ENCODE measurements at regions of chr14 and their contacts with region 1.

Region 1: DNA sequence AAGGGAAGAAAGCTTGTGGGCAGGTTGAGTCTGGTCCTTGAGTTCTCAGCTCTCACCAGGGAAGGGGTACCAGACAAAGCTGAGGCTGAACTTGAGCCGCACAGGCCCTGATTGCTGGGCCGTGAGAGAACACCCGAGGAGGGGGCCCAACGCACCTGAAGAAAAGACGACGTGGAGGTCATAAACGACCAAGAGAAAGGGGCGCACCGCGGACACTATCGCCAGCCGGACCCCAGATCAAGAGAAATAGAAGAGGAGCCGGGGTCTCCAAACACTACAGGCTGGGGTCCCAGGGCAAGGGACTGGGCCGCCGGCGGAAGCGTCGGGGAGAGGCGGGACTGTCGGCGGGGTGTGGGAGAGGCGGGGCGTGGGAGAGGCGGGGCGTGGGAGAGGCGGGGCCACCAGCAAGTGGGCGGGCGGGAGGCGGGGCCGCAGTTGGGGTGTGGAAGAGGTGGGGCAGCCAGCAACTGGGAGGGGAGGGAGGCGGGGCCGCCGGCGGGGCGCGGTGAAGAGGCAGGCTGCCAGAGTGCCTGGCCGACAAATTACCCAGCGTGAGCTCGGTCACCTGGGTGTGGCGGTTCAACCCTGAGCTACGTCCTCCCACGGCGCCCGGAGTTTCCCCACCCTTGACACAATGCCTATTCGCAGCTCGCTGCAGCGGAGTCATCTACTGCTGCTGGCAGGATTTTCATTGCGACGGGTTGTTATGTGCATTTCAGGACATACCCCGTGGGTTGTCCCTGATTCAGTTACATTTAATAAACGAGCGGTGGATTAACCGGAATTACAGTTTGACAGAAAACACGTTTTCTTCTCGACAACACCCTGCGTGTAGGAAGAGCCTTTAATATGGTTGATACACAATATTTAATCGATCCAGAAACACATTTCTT is 15.5 kb upstream of the NEMF start:
- DNase-seq: peak; percentile 95
- H3K4me3 Mint-ChIP-seq: peak overlapping the region; percentile 96
- H3K27ac Mint-ChIP-seq: peak overlapping the region; percentile 99
- H3K4me1 Mint-ChIP-seq: peaks cover 11% of the 10 kb centered on the region
- H3K27me3 Mint-ChIP-seq: no peaks in the 10 kb centered on the region
- CTCF ChIP-seq: no peak

Region 2: DNA sequence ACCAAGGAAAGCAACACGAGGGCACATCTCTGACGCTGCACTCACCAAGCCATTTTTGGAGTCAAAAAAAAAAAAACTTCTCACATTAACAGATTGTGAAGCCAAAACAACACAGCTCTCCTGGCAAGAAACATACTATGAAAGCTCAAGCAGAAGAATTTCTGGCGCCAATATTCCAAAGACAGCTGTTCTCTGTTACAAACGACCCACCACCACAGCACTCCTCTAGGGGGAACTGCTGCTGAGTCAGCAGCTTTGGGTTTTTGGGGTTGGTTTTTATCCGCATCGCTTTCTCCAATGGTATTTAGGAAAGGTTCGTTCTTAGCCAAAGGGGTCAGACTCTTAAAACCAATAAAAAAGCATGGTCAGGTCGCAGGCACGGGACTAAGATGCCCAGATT is 661.2 kb before region 1 on chr14:
- CTCF ChIA-PET with region 1: no interaction called
- POLR2A ChIA-PET with region 1: no interaction called
- intact Hi-C with region 1: no loop called
- DNase-seq: no peak
- H3K4me3 Mint-ChIP-seq: no peak overlapping the region
- H3K27ac Mint-ChIP-seq: no peak overlapping the region
- H3K4me1 Mint-ChIP-seq: no peaks in the 10 kb centered on the region
- H3K27me3 Mint-ChIP-seq: no peaks in the 10 kb centered on the region
- CTCF ChIP-seq: no peak

Region 3: DNA sequence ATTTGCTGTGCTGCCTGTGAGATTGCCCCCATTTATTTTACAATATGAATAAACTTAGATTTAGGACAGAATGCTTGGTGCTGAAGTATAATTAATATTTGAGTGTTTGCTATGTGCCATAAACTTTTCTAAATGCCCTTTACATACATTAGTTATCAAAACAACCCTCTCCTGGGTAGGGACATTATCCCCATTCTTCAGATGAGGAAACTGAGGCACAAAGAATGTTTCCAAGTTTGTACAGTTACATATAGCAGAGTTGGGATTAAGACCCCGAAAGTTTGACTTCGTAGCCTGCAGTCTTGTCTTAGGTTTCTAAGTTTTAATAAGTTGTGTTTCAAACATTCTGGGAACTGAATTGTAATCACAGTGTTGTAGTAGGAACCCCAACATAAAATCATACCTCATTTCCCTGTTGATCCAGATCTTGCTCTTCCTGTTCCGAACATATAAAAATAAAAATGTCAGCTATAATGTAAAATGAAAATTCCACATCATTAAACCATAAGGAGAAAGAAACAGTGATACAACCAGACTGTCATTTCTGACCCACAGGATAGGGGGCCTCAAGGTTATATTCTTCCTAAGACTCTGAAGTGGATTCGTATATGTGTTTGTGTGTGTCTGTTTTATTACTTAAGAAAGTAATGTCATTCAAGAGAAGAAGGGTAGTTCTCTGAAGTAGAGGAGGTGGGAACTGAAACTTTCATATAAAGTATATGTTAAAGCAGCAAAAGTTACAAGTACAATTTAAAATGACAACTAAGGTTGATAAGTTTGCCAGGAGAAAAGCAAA is 81.6 kb before region 1 on chr14:
- CTCF ChIA-PET with region 1: no interaction called
- POLR2A ChIA-PET with region 1: no interaction called
- intact Hi-C with region 1: no loop called
- DNase-seq: no peak
- H3K4me3 Mint-ChIP-seq: no peak overlapping the region
- H3K27ac Mint-ChIP-seq: no peak overlapping the region
- H3K4me1 Mint-ChIP-seq: no peaks in the 10 kb centered on the region
- H3K27me3 Mint-ChIP-seq: no peaks in the 10 kb centered on the region
- CTCF ChIP-seq: no peak

Region 4: DNA sequence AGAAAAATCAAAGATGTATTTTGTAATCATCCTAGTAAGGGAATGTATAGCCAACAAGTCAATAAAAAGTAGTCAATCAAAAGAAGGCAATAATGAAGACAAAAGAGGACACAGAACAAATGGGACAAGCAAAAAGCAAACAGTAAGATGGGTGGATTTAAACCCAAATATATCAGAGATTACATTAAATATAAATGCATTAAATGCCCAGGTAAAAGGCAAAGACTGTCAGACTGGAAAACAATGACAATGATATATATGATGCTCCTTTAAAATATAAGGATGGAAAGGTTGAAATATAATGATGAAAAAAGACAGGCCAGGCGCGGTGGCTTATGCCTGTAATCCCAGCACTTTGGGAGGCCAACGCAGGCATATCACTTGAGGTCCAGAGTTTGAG is 51.2 kb before region 1 on chr14:
- CTCF ChIA-PET with region 1: no interaction called
- POLR2A ChIA-PET with region 1: no interaction called
- intact Hi-C with region 1: no loop called
- DNase-seq: no peak
- H3K4me3 Mint-ChIP-seq: no peak overlapping the region
- H3K27ac Mint-ChIP-seq: no peak overlapping the region
- H3K4me1 Mint-ChIP-seq: no peaks in the 10 kb centered on the region
- H3K27me3 Mint-ChIP-seq: no peaks in the 10 kb centered on the region
- CTCF ChIP-seq: no peak

Region 5: DNA sequence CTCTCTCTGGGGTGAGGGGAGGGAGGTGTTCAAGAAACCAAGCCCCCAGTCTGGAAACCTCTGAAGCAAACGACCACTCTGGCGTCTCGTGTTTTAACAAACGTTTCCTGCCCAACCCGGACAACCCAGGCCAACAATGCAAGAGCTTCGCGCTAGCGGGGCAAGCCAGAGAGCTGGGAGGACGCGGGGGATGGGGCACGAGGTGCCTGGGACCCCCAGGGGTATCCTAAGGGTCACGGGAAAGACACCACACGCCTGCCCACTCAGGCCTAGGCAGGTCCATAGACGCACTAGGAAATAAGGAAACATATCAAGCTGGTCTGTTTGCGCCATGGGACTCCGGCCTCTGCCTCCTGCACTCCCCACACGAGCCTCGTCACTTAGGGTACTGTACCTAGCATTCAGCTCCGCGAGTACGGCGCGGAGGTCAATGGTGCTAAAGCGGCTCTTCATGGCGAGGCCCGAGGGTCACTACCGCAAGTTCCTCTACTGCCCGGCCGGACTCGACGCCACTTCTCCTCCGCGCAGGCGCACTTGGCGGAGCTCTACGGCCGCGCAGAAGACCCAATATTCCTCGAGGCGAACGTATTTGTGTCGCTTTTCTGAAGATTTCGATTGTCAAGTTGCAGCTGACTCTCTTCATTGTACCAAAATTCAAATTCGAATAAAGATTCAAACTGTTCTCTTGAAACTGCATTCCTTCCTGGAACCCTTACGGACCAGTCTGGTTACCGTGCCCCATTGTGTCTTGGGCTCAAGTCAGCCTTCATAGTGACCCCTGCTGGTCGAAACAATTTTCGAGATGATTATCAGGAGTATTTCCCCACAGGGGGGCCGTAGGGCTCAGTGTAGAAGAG is 15.5 kb before region 1 on chr14 and contains the start of gene NEMF:
- CTCF ChIA-PET with region 1: interaction called, 101 read pairs
- POLR2A ChIA-PET with region 1: interaction called, 137 read pairs
- intact Hi-C with region 1: no loop called
- DNase-seq: peak; percentile 92
- H3K4me3 Mint-ChIP-seq: peak within 1 kb of the TSS; percentile 99
- H3K27ac Mint-ChIP-seq: peak within 1 kb of the TSS; percentile 99
- H3K4me1 Mint-ChIP-seq: peaks cover 15% of the 10 kb centered on the region
- H3K27me3 Mint-ChIP-seq: no peaks in the 10 kb centered on the region
- CTCF ChIP-seq: peak; percentile 88
- total RNA-seq, gene NEMF: 55.0 and 57.7 TPM in 2 replicates

Region 6: DNA sequence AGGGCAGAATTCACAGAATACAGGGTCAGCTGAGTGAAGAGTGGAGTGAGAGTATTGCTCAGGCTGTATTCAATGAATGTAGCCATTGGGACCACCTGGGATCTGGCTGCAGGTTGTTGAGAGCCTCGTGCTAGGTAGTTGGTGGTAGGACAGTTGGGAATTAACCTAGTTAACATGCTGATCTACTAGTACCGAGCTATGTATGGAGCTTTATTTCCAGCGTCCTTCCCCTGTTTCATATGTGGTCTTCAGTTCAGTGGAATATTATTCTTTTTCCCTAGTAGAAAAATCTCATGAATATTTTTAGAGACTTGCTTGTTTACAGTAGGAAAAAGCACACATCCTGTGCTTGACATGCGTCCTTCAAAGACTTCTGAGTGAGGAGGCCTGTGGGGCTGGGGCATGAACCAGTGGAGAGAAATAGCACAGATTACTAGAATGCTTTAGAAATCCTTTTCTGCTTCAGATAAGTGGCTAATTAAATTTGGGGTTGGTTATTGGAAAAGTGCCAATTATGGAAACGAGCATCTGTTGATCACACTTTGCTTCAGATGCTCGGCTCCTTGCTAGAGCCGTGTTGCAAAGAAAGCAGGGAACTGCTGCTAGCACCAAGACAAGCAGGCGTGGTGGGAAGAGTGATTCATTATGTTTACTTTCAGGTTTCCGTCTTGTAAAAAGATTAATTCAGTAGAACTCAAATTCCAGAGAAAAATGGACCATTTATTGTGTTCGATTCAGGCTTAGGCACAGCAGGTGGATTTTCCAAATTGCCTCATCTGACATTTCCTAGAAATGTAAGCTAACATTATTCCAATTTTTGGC is 78.5 kb after region 1 on chr14:
- CTCF ChIA-PET with region 1: interaction called, 42 read pairs
- POLR2A ChIA-PET with region 1: interaction called, 33 read pairs
- intact Hi-C with region 1: no loop called
- DNase-seq: peak; percentile 72
- H3K4me3 Mint-ChIP-seq: peak overlapping the region; percentile 42
- H3K27ac Mint-ChIP-seq: peak overlapping the region; percentile 81
- H3K4me1 Mint-ChIP-seq: peaks cover 38% of the 10 kb centered on the region
- H3K27me3 Mint-ChIP-seq: no peaks in the 10 kb centered on the region
- CTCF ChIP-seq: no peak

Region 7: DNA sequence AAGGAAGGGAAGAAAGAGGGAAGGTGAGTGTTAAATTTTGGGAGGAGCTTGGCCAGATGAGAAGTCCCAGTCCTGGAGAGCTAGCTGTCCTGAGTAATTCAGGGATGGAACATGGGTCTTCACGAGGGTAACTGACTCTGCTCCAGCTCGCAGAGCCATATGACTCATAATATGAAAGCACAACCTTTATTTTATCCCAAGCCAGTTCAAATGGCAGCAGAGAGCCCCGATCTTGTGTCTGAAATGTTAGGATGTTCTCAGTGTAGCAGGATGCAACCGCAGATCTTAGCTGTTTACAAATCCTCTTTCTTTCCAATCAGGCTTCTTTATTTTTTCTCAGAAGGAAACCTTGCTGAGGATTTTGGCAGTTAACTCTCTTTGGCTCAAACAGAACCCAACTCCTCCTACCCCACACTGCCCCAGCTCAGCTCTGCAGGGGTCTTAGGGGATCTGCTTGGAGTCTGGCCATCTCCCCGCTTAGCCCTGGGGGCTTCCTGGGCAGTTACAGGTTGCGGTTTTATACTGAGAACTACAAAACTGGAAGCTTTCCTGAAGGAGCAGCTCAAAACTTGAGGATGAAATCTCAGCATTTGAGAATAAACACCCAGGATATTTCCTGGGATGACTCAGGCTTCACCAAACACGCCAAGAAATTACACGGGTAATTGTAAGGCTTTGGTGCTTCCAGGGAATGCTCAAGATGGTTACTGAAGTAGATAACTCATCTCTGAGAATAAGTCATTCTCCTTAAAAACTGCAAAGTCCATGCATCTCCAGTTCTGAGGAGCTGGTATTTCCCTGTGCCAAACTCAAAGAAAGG is 155.8 kb after region 1 on chr14:
- CTCF ChIA-PET with region 1: interaction called, 31 read pairs
- POLR2A ChIA-PET with region 1: interaction called, 9 read pairs
- intact Hi-C with region 1: no loop called
- DNase-seq: peak; percentile 78
- H3K4me3 Mint-ChIP-seq: no peak overlapping the region
- H3K27ac Mint-ChIP-seq: peak overlapping the region; percentile 90
- H3K4me1 Mint-ChIP-seq: peaks cover 15% of the 10 kb centered on the region
- H3K27me3 Mint-ChIP-seq: no peaks in the 10 kb centered on the region
- CTCF ChIP-seq: no peak

Region 8: DNA sequence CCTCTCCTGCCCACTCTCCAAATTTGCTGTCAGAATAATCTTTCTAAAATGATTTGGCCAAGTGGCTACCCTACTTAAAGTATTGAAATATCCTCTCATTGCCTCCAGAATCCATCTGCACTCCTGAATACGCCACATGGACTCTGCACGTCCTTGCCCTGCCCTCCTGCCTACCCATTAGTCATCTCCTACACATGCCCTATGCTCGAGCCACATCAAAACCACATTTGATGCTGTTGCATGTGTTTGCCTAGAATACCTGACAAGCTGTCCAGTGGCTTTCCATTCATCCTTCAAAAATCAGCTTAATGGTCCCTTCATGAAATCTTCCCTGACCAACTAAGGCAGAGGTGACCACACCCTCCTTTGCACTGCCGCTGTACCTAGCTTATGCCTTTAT is 231.3 kb after region 1 on chr14:
- CTCF ChIA-PET with region 1: interaction called, 178 read pairs
- POLR2A ChIA-PET with region 1: interaction called, 32 read pairs
- intact Hi-C with region 1: no loop called
- DNase-seq: peak; percentile 47
- H3K4me3 Mint-ChIP-seq: no peak overlapping the region
- H3K27ac Mint-ChIP-seq: peak overlapping the region; percentile 33
- H3K4me1 Mint-ChIP-seq: peaks cover 11% of the 10 kb centered on the region
- H3K27me3 Mint-ChIP-seq: no peaks in the 10 kb centered on the region
- CTCF ChIP-seq: no peak

Region 9: GRCh38 chr14:50532502-50533240 is 664.6 kb after region 1 on chr14 and contains the start of gene MAP4K5:
- CTCF ChIA-PET with region 1: no interaction called
- POLR2A ChIA-PET with region 1: no interaction called
- intact Hi-C with region 1: loop called (anchors 10 kb)
- DNase-seq: peak; percentile 89
- H3K4me3 Mint-ChIP-seq: peak within 1 kb of the TSS; percentile 80
- H3K27ac Mint-ChIP-seq: peak within 1 kb of the TSS; percentile 46
- H3K4me1 Mint-ChIP-seq: peaks cover 34% of the 10 kb centered on the region
- H3K27me3 Mint-ChIP-seq: no peaks in the 10 kb centered on the region
- CTCF ChIP-seq: peak; percentile 91
- total RNA-seq, gene MAP4K5: 43.8 and 45.7 TPM in 2 replicates